Breast epithelium (tissue), 4 donors: ENCODE measurements at regions of chrX and their contacts with region 1.

Region 1: DNA sequence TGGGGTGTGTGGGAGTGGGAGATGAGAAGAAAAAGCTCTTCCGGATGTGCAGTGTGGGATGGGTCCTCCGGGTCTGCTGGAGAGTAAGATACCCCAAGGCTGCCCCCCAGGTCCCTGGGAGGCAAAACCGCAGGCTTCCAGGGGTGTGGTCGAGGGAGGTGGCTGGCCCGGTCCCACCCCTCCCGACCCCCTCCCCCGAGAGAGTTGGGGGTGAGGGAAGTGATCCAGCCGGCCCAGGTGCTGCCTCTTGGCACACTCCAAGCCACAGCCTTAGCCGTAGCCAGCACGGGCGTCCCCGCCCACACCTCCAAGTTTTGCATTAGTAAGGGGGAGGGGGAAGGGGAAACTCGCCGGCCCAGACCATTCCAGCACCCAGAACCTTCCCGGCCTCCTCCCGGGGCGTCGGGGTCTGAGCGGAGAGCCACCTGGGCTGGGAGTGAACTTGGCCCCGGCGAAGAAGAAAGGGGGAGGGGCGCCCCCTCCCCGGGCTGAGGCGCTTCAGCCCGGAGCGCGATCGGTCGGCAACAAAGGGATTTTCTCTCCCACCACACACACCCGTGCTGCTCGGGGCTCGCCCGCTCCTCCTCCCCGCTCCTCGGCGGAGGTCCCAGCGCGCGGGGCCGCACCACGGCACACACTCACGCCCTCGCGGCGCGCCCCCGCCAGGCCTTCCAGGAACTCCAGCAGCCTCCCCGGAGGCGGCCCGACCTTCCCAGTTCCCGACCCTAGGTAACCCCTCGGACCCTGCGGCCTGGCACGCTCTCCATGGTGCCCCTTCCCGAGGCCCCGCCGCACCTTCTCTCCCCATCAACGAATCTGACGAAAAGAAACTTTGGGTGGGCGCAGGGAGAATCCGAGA is 14.4 kb downstream of the BCOR start:
- DNase-seq: no peak
- H3K4me3 ChIP-seq: peak overlapping the region; percentile 32 to 63 (median 47)
- H3K27ac ChIP-seq: peak overlapping the region in 1 of 2 donors; percentile 14
- H3K4me1 ChIP-seq: no peaks in the 10 kb centered on the region
- H3K27me3 ChIP-seq: peaks cover 0 to 77% of the 10 kb centered on the region in 2 donors
- CTCF ChIP-seq: no peak
- POLR2A ChIP-seq: no peak

Region 2: DNA sequence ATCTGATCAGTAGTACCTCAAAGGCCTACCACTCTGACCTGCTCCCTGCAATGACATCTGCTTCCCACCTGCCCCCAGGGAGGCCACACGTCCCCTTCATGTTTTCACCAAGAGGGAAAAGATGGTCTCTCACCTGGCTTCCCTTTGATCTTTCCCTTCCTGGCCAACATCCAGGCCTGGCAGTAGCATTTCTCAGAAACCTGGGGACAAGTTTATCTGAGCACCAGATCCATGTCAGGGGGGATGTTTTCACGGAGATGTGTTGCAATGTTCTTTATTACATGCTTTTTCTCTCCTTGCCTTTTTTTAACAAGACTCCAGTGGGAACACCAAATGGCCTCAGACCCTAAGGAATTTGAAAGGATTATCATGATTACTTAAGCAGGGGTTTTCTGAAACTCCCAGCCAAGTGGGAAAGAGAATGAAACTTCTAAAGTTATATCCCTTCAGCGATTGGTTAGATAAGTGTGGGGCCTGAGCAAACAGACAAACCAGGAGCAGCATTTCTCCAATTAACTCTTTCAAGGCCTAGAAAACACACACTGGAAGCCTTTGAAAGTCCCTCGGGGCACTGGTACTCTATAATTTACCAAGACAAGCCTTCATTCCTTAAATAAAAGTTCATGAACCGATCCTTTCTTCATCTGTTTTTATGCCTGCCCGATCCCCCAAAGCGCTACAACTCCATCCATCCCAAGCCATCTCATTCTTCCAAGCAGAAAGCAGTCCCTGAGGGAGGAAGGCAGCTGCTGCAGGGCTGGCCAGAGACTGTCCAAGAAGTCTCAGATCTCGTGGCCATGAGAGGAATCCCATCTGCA is 79.7 kb before region 1 on chrX:
- intact Hi-C with region 1: loop called (anchors 1 kb)
- DNase-seq: no peak
- H3K4me3 ChIP-seq: no peak overlapping the region
- H3K27ac ChIP-seq: peak overlapping the region in 1 of 2 donors; percentile 68
- H3K4me1 ChIP-seq: peaks cover 0 to 6% of the 10 kb centered on the region in 2 donors
- H3K27me3 ChIP-seq: peaks cover 0 to 67% of the 10 kb centered on the region in 2 donors
- CTCF ChIP-seq: no peak
- POLR2A ChIP-seq: no peak